ENCODE measurements at regions of chr11 and their contacts with region 1.

Region 1: DNA sequence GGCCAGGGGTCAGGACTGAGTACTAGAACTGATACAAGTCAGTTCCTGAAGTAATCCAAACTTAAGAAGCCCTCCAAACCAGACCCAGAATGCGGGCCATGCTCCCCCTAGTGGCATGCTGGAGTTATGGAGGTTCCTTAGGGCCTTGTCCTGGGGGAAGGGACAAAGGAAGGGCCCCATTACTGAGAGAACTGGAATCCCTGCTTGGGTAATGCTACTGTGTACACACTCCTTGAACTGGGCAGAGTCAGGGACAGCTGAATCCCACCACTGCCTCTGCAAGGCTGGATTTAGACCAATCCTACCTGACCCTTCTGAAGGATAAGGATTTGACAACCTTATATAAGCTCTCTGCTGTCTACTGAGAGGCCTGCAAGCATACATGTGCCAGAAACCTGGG is 97.3 kb upstream of the AKIP1 start:
- DNase-seq: peak; percentile 83
- H3K4me3 ChIP-seq: no peak overlapping the region
- H3K27ac ChIP-seq: peak overlapping the region; percentile 68
- H3K4me1 ChIP-seq: peaks cover 8% of the 10 kb centered on the region
- H3K27me3 ChIP-seq: no peaks in the 10 kb centered on the region
- CTCF ChIP-seq: peak; percentile 81

Region 2: GRCh38 chr11:8584511-8584910 is 229.1 kb before region 1 on chr11:
- intact Hi-C with region 1: no loop called
- DNase-seq: no peak
- H3K4me3 ChIP-seq: no peak overlapping the region
- H3K27ac ChIP-seq: no peak overlapping the region
- H3K4me1 ChIP-seq: no peaks in the 10 kb centered on the region
- H3K27me3 ChIP-seq: no peaks in the 10 kb centered on the region
- CTCF ChIP-seq: no peak

Region 3: DNA sequence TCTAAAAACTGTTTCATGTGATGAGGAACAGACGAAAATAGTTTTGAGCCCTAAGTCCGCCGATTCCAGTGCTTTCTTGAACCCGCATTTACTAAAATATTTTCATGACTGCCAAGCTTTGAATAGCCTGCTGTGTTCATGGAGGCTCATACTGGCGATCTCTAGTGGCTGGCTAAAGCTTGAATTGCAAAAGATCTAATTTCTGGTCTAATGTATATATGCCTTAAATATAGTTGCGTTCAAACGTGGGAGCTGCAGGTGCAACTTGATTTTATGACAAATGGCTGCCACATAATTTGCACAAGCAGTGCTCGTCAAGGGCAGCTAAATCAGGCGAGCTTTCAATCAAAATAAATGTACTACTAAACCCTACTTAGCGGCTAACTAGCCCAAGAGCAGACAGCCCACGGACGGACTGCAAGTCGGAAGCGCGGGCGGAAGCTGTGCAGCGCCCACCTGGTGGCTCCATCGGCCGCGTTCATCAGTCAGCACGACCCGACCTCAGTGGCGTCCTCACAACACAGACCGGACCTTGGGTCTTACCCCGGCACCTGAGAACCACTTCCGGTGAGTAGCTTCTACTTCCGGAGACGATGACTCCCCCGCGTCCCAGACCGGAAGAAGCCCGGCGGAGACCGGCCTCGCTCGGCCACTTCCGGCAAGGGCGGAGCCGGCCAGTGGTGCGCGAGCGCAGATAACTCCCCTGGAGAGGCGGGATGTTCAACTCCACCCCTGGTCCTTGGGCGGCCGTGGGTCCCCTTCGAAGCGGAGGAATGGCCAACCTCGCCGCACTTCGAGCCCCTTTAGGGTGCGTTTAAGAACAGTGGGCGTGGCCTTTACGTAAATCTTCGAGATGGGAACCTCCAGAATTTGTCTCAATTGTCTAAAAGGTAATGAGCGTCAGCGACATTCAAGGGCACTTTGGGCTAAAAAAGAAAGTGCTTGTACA is 125.0 kb before region 1 on chr11:
- intact Hi-C with region 1: loop called (anchors 5 kb)
- DNase-seq: peak; percentile 96
- H3K4me3 ChIP-seq: peak overlapping the region; percentile 50
- H3K27ac ChIP-seq: peak overlapping the region; percentile 86
- H3K4me1 ChIP-seq: peaks cover 20% of the 10 kb centered on the region
- H3K27me3 ChIP-seq: no peaks in the 10 kb centered on the region
- CTCF ChIP-seq: no peak

Region 4: GRCh38 chr11:8754241-8754640 is 59.4 kb before region 1 on chr11:
- intact Hi-C with region 1: no loop called
- DNase-seq: no peak
- H3K4me3 ChIP-seq: no peak overlapping the region
- H3K27ac ChIP-seq: no peak overlapping the region
- H3K4me1 ChIP-seq: no peaks in the 10 kb centered on the region
- H3K27me3 ChIP-seq: no peaks in the 10 kb centered on the region
- CTCF ChIP-seq: no peak

Measured in colonic mucosa (tissue), 4 donors.